ENCODE measurements at regions of chr5 and their contacts with region 1.

Region 1: DNA sequence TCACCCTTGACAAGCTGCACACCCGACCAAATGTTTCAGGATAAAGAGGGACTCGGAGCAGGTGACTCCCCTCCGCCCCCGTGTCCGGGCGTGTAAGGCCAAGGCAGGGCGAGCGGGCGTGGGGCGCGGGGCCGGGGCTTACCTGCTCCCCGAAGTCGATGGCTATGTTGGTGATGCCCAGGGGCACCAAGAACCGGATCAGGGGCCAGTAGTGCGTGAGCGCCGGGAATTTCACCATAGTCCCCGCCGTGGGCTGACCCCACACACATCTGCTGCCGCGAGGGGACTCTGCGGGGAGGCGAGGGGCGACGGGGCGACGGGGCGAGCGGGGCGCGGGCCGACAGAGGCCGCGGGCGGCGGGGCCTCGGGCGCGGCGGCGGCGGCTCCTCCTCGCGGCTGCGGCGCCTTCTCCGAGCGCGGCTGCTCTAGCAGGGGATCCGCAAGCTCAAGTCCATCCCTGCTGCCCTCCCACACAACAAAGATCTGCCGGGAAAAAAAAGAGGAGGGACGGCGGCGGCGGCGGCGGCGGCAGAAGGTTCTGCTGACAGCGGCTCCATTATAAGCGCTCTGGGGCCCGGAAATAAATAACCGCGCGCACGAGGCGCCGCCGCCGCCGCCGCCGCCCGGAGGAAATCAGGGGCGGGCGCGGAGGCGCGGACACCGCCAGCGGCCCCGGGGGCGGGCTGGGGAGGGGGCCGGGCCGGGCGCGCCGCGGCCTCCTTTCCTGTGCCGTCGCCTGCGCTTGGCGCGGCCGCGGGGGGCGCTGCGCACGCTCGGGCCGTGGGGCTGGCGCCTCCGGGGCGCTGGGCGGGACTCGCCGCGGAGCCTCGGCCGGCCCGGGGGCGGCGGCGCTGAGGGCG is at the start of gene ANKH:
- DNase-seq: peak; percentile 79 to 93
- ATAC-seq: peak; percentile 86 to 97 (median 91)
- H3K4me3 ChIP-seq: peak within 1 kb of the TSS; percentile 66
- H3K4me3 Mint-ChIP-seq: peak within 1 kb of the TSS; percentile 97
- H3K27ac ChIP-seq: peak within 1 kb of the TSS; percentile 74
- H3K27ac Mint-ChIP-seq: peak within 1 kb of the TSS; percentile 85 to 94
- H3K4me1 ChIP-seq: peaks cover 22% of the 10 kb centered on the region
- H3K4me1 Mint-ChIP-seq: peaks cover 26 to 29% of the 10 kb centered on the region in 2 donors
- H3K27me3 ChIP-seq: peaks cover 3% of the 10 kb centered on the region
- H3K27me3 Mint-ChIP-seq: peaks cover 6 to 7% of the 10 kb centered on the region in 2 donors
- CTCF ChIP-seq: no peak
- total RNA-seq, gene ANKH: 52.9 to 78.0 (median 63.8) TPM

Region 2: GRCh38 chr5:14996997-14997396 is 125.6 kb after region 1 on chr5:
- intact Hi-C with region 1: loop called (anchors 2 kb)
- DNase-seq: peak in 1 of 2 donors; percentile 30
- ATAC-seq: no peak
- H3K4me3 ChIP-seq: no peak overlapping the region
- H3K4me3 Mint-ChIP-seq: no peak overlapping the region
- H3K27ac ChIP-seq: no peak overlapping the region
- H3K27ac Mint-ChIP-seq: no peak overlapping the region
- H3K4me1 ChIP-seq: peaks cover 24% of the 10 kb centered on the region
- H3K4me1 Mint-ChIP-seq: peaks cover 12 to 17% of the 10 kb centered on the region in 2 donors
- H3K27me3 ChIP-seq: peaks cover 2% of the 10 kb centered on the region
- H3K27me3 Mint-ChIP-seq: peaks cover 19 to 32% of the 10 kb centered on the region in 2 donors
- CTCF ChIP-seq: no peak

Region 3: GRCh38 chr5:15132434-15133405 is 261.3 kb after region 1 on chr5:
- intact Hi-C with region 1: no loop called
- DNase-seq: no peak
- ATAC-seq: no peak
- H3K4me3 ChIP-seq: no peak overlapping the region
- H3K4me3 Mint-ChIP-seq: no peak overlapping the region
- H3K27ac ChIP-seq: no peak overlapping the region
- H3K27ac Mint-ChIP-seq: no peak overlapping the region
- H3K4me1 ChIP-seq: no peaks in the 10 kb centered on the region
- H3K4me1 Mint-ChIP-seq: no peaks in the 10 kb centered on the region
- H3K27me3 ChIP-seq: no peaks in the 10 kb centered on the region
- H3K27me3 Mint-ChIP-seq: peaks cover 0 to 3% of the 10 kb centered on the region in 2 donors
- CTCF ChIP-seq: no peak

Region 4: GRCh38 chr5:16345454-16345853 is 1474.0 kb after region 1 on chr5:
- intact Hi-C with region 1: no loop called
- DNase-seq: no peak
- ATAC-seq: no peak
- H3K4me3 ChIP-seq: no peak overlapping the region
- H3K4me3 Mint-ChIP-seq: no peak overlapping the region
- H3K27ac ChIP-seq: no peak overlapping the region
- H3K27ac Mint-ChIP-seq: no peak overlapping the region
- H3K4me1 ChIP-seq: no peaks in the 10 kb centered on the region
- H3K4me1 Mint-ChIP-seq: no peaks in the 10 kb centered on the region
- H3K27me3 ChIP-seq: no peaks in the 10 kb centered on the region
- H3K27me3 Mint-ChIP-seq: no peaks in the 10 kb centered on the region
- CTCF ChIP-seq: no peak

Measured in natural killer cell (primary cell).